ENCODE measurements at regions of chr20 and their contacts with region 1.

Region 1: GRCh38 chr20:62143118-62143973 is at the starts of genes PSMA7 and SS18L1:
- DNase-seq: peak; percentile 81
- H3K4me3 ChIP-seq: peak within 1 kb of the TSS; percentile 59 to 80 (median 69)
- H3K27ac ChIP-seq: peak within 1 kb of the TSS; percentile 88
- H3K4me1 ChIP-seq: peaks cover 8% of the 10 kb centered on the region
- H3K27me3 ChIP-seq: no peaks in the 10 kb centered on the region
- CTCF ChIP-seq: no peak
- POLR2A ChIP-seq: peak; percentile 70
- total RNA-seq, gene PSMA7: 389 and 393 TPM in 2 replicates
- total RNA-seq, gene SS18L1: 21.7 and 22.1 TPM in 2 replicates

Region 2: GRCh38 chr20:62182613-62183425 is 39.5 kb after region 1 on chr20 and contains the start of gene MTG2:
- CTCF ChIA-PET with region 1: interaction called, 3 read pairs
- POLR2A ChIA-PET with region 1: no interaction called
- dilution Hi-C with region 1: no loop called
- intact Hi-C with region 1: loop called (anchors 1 kb)
- DNase-seq: peak; percentile 93
- H3K4me3 ChIP-seq: peak within 1 kb of the TSS; percentile 87 to 98 (median 93)
- H3K27ac ChIP-seq: peak within 1 kb of the TSS; percentile 92
- H3K4me1 ChIP-seq: peaks cover 22% of the 10 kb centered on the region
- H3K27me3 ChIP-seq: no peaks in the 10 kb centered on the region
- CTCF ChIP-seq: no peak
- POLR2A ChIP-seq: peak; percentile 90
- total RNA-seq, gene MTG2: 22.1 and 31.6 TPM in 2 replicates

Measured in endothelial cell of umbilical vein (primary cell).